ENCODE measurements at regions of chr3 and their contacts with region 1.

Region 1: GRCh38 chr3:171277456-171278298 is 182.5 kb downstream of the TNIK start:
- DNase-seq: no peak
- ATAC-seq: no peak
- H3K4me3 ChIP-seq: no peak overlapping the region
- H3K4me3 Mint-ChIP-seq: no peak overlapping the region
- H3K27ac ChIP-seq: no peak overlapping the region
- H3K27ac Mint-ChIP-seq: no peak overlapping the region
- H3K4me1 ChIP-seq: peaks cover 19% of the 10 kb centered on the region
- H3K4me1 Mint-ChIP-seq: peaks cover 65% of the 10 kb centered on the region
- H3K27me3 ChIP-seq: no peaks in the 10 kb centered on the region
- H3K27me3 Mint-ChIP-seq: no peaks in the 10 kb centered on the region
- CTCF ChIP-seq: no peak

Region 2: DNA sequence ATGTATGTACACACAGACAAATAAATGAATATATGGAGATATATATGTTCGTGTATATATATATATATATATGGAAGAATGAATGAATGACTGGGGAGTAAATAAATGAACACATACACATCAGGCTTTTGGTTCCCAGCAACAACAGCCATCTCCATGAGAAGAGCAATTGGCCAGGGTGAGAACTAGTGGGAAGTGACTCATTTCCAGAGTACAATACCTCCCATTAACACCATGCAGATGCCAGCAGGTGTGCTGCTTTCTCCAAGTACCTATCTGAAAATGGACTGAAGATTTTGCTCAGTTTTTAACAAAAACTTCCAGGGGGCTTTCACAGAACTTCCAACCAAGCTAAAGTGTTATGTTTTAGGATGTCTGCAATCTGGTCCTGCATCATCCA is 71.4 kb before region 1 on chr3:
- CTCF ChIA-PET with region 1: no interaction called
- POLR2A ChIA-PET with region 1: interaction called, 3 read pairs
- intact Hi-C with region 1: loop called in 1 of 2 experiments (anchors 5 kb)
- DNase-seq: no peak
- ATAC-seq: no peak
- H3K4me3 ChIP-seq: no peak overlapping the region
- H3K4me3 Mint-ChIP-seq: no peak overlapping the region
- H3K27ac ChIP-seq: no peak overlapping the region
- H3K27ac Mint-ChIP-seq: no peak overlapping the region
- H3K4me1 ChIP-seq: no peaks in the 10 kb centered on the region
- H3K4me1 Mint-ChIP-seq: peaks cover 11% of the 10 kb centered on the region
- H3K27me3 ChIP-seq: no peaks in the 10 kb centered on the region
- H3K27me3 Mint-ChIP-seq: no peaks in the 10 kb centered on the region
- CTCF ChIP-seq: no peak

Region 3: GRCh38 chr3:171225708-171226107 is 52.0 kb before region 1 on chr3:
- CTCF ChIA-PET with region 1: interaction called, 3 read pairs
- POLR2A ChIA-PET with region 1: interaction called, 3 read pairs
- intact Hi-C with region 1: loop called in 1 of 2 experiments (anchors 10 kb)
- DNase-seq: no peak
- ATAC-seq: no peak
- H3K4me3 ChIP-seq: no peak overlapping the region
- H3K4me3 Mint-ChIP-seq: no peak overlapping the region
- H3K27ac ChIP-seq: no peak overlapping the region
- H3K27ac Mint-ChIP-seq: peak overlapping the region; percentile 79
- H3K4me1 ChIP-seq: peaks cover 14% of the 10 kb centered on the region
- H3K4me1 Mint-ChIP-seq: peaks cover 53% of the 10 kb centered on the region
- H3K27me3 ChIP-seq: no peaks in the 10 kb centered on the region
- H3K27me3 Mint-ChIP-seq: no peaks in the 10 kb centered on the region
- CTCF ChIP-seq: no peak

Region 4: DNA sequence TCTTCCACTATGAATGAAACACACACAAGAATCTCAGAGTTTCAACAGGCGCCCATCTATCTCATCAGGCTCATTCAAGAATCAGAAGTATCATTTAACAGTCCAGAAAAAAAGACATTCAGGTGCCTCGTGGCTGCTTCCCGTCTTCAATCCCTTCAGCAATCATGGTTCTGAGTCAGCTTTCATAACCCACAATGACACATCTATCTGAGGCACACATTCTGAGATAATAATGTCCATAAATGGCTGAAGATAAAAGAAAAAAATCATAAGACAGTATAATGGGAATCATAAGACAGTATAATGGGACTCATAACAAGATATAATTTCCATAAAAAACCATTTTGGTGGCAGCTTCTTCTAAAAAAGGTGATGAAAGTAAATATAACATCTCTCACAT is 130.1 kb after region 1 on chr3:
- CTCF ChIA-PET with region 1: no interaction called
- POLR2A ChIA-PET with region 1: no interaction called
- intact Hi-C with region 1: no loop called
- DNase-seq: no peak
- ATAC-seq: no peak
- H3K4me3 ChIP-seq: no peak overlapping the region
- H3K4me3 Mint-ChIP-seq: no peak overlapping the region
- H3K27ac ChIP-seq: no peak overlapping the region
- H3K27ac Mint-ChIP-seq: no peak overlapping the region
- H3K4me1 ChIP-seq: peaks cover 11% of the 10 kb centered on the region
- H3K4me1 Mint-ChIP-seq: peaks cover 74% of the 10 kb centered on the region
- H3K27me3 ChIP-seq: no peaks in the 10 kb centered on the region
- H3K27me3 Mint-ChIP-seq: no peaks in the 10 kb centered on the region
- CTCF ChIP-seq: no peak

Measured in CD8-positive, alpha-beta T cell (primary cell).